ENCODE measurements at regions of chr5 and their contacts with region 1.

Region 1: DNA sequence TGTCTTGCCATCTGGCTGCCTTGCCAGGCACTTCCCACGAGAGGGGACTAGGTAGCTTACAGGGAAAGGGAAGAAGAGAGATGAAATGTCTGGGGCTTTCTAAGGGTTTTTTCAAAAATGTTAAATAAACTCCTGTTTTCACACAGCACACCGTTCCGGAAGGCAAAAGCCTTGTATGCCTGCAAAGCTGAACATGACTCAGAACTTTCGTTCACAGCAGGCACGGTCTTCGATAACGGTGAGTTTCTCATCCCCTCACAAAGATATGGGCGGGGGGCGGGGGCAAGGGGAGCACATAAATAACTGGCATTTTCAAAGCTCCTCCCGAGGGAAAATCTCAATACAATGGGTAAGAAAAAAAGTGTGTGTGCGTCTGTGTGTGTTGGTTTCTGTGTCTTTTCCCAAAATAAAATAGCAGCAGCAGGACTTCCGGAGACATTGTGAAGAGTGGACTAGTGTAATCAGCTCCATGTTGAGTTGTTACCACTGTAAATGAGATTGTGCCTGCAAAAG is 189.6 kb downstream of the NR3C1 start:
- DNase-seq: peak; percentile 88
- H3K4me3 ChIP-seq: no peak overlapping the region
- H3K27ac ChIP-seq: peak overlapping the region; percentile 81
- H3K4me1 ChIP-seq: peaks cover 46% of the 10 kb centered on the region
- H3K27me3 ChIP-seq: no peaks in the 10 kb centered on the region
- CTCF ChIP-seq: peak; percentile 18; the same call in 1 of the 2 replicates

Region 2: GRCh38 chr5:142922223-142922952 is 291.5 kb before region 1 on chr5:
- CTCF ChIA-PET with region 1: no interaction called
- POLR2A ChIA-PET with region 1: no interaction called
- intact Hi-C with region 1: loop called (anchors 5 kb)
- DNase-seq: peak; percentile 61
- H3K4me3 ChIP-seq: no peak overlapping the region
- H3K27ac ChIP-seq: no peak overlapping the region
- H3K4me1 ChIP-seq: peaks cover 21% of the 10 kb centered on the region
- H3K27me3 ChIP-seq: no peaks in the 10 kb centered on the region
- CTCF ChIP-seq: peak; percentile 63

Region 3: GRCh38 chr5:143016777-143017516 is 197.0 kb before region 1 on chr5:
- CTCF ChIA-PET with region 1: no interaction called
- POLR2A ChIA-PET with region 1: no interaction called
- intact Hi-C with region 1: loop called (anchors 5 kb)
- DNase-seq: peak; percentile 68
- H3K4me3 ChIP-seq: no peak overlapping the region
- H3K27ac ChIP-seq: no peak overlapping the region
- H3K4me1 ChIP-seq: no peaks in the 10 kb centered on the region
- H3K27me3 ChIP-seq: no peaks in the 10 kb centered on the region
- CTCF ChIP-seq: peak; percentile 82

Region 4: GRCh38 chr5:143128412-143129071 is 85.4 kb before region 1 on chr5:
- CTCF ChIA-PET with region 1: no interaction called
- POLR2A ChIA-PET with region 1: no interaction called
- intact Hi-C with region 1: loop called (anchors 2 kb)
- DNase-seq: peak; percentile 95
- H3K4me3 ChIP-seq: peak overlapping the region; percentile 5
- H3K27ac ChIP-seq: peak overlapping the region; percentile 85
- H3K4me1 ChIP-seq: peaks cover 63% of the 10 kb centered on the region
- H3K27me3 ChIP-seq: no peaks in the 10 kb centered on the region
- CTCF ChIP-seq: no peak

Region 5: DNA sequence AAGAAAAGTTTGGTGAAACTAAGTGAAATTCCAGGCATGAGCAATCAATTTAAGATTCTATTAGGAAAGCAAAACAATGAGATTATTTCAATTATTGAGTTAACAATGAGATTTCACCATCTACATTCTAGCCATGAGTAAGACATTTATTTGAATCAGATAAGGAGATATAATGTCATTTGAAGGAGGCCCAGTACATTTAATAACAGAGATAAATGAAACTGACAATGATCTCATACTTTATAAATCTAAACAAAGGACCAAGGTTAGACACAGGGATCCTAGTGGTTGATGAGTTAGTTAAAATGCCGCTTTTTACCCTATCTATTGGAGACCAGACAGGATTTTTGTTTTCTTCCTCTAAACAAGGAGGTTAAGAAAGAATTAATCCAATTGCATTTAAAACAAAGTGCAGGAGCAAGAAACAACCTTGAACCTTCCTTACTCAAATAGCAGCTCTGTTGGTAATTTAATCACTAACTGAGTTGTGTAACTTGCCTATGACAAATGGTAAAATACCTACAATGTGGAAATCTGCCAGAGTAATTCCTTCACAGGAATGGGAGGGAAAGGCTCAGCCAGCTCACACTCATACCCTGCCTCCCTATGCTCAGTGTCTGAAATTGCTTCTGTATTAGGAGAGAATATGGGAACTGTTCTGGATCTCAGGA is 293.1 kb after region 1 on chr5:
- CTCF ChIA-PET with region 1: no interaction called
- POLR2A ChIA-PET with region 1: no interaction called
- intact Hi-C with region 1: loop called (anchors 10 kb)
- DNase-seq: peak; percentile 33
- H3K4me3 ChIP-seq: no peak overlapping the region
- H3K27ac ChIP-seq: no peak overlapping the region
- H3K4me1 ChIP-seq: peaks cover 10% of the 10 kb centered on the region
- H3K27me3 ChIP-seq: no peaks in the 10 kb centered on the region
- CTCF ChIP-seq: no peak

Region 6: GRCh38 chr5:143824851-143825720 is 611.2 kb after region 1 on chr5:
- CTCF ChIA-PET with region 1: no interaction called
- POLR2A ChIA-PET with region 1: no interaction called
- intact Hi-C with region 1: loop called (anchors 10 kb)
- DNase-seq: peak; percentile 76
- H3K4me3 ChIP-seq: no peak overlapping the region
- H3K27ac ChIP-seq: no peak overlapping the region
- H3K4me1 ChIP-seq: no peaks in the 10 kb centered on the region
- H3K27me3 ChIP-seq: no peaks in the 10 kb centered on the region
- CTCF ChIP-seq: peak; percentile 95

Measured in A673 (cell line).